Motor neuron (in vitro differentiated cells): ENCODE measurements at regions of chr20 and their contacts with region 1.

Region 1: DNA sequence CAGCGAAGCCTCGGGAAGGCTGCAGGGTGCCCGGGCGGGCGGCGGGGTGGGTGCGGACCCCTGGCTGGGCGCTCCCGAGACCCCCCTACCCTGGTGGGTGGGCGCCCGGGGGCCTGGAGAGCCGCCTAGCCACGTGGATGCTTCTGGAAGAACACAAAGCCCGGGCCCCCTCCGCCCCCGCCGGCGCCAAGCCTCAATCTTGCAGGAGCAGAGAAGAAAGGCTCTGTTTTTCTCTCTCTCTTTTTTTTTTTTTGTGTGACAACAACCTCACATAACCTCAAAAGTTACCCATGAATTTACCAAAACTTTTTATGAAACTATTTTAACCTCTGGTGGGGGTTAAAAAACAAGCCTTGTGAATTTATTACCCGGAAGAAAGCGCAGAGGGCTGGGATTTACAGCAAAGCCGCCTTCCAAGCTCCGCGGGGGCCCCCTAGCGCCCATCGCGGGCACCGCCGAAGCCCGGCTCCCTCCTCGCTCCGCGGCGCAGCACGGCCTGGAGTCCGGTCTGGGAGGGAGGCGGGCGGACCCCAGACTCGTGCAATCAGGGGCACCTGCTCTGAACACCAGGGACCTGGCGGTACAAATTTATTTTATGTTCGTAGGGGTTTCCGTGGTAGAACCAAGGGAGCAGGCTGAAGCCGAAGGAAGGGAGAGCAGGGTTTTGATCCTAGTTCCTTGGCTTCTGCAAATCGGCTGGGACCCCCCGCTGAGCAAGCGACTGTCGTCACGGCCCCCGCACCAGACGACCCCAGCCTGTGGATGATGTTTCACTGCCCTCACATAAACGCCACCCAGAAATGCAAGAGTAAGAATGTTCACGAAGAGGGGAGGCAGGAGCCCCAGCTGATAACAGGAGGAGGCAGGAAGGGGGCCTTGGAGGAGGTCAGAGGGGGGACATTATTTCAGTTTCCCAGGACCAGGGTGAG is 58.9 kb downstream of the ZNF831 start:
- ATAC-seq: peak; percentile 87 to 98 (median 90)
- H3K4me3 ChIP-seq: peak overlapping the region; percentile 28 to 40 (median 30)
- H3K27ac ChIP-seq: no peak overlapping the region
- H3K4me1 ChIP-seq: peaks cover 10 to 38% of the 10 kb centered on the region in 2 donors

Region 2: DNA sequence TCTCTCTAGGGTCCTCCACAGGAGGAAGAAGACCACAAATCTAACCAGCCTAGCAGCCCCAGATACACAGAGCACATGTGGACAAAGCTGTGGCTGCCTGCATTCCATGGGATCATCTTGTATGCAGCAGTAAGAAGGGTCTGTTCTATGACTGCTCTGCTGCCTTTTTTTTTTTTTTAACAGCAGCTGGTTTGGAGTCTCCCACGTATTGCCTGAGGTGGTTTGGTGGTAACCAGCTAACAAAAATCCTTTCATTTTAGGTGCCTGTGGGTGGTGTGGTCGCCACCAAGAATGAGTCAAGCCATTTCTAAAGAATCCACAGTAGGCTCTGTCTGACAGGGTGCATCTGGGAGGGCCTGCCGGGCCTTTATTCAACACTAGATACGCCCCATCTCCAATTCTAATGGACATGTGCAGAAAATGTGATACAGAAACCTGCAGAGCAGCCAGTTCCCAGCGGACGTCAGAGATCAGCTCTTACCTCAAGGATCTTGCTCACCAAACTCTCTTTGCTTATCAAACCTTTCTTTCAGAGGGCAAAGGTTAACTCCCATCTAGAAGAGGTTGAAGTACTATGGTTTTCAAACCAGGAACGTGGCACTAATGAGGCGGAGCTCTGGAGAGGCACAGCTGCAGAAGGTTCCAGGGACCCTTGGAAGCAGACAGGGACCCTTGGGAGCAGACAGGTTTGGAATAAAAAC is 403.8 kb before region 1 on chr20:
- in situ Hi-C with region 1: no loop called
- ATAC-seq: peak in 3 of 8 experiments; percentile 97 to 99 (median 98)
- H3K4me3 ChIP-seq: no peak overlapping the region
- H3K27ac ChIP-seq: no peak overlapping the region
- H3K4me1 ChIP-seq: no peaks in the 10 kb centered on the region

Region 3: DNA sequence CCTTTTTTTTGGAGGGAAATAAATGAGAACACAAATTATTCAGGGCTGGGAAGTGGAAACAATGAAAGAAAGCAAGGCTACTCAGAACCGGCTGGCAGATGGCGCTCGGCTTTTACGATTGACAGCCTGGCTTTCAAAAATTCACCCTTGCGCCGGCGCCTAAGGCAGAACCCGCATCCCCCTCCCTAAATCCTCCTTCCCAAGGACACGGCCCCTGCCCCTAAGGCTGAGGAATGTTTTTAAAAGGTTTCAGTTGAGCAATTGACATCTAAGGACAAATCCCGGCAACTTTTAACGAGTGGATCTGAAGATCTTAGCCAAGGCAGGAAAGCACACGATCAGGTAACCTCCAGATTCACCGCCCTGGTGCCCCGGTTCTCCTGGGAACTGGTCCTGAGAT is 353.7 kb before region 1 on chr20:
- in situ Hi-C with region 1: loop called (anchors 10 to 25 kb)
- ATAC-seq: peak in 3 of 8 experiments; percentile 17 to 35 (median 33)
- H3K4me3 ChIP-seq: no peak overlapping the region
- H3K27ac ChIP-seq: no peak overlapping the region
- H3K4me1 ChIP-seq: peaks cover 9 to 18% of the 10 kb centered on the region in 2 donors

Region 4: GRCh38 chr20:58993332-58994201 is 228.9 kb before region 1 on chr20:
- in situ Hi-C with region 1: no loop called
- ATAC-seq: no peak
- H3K4me3 ChIP-seq: no peak overlapping the region
- H3K27ac ChIP-seq: no peak overlapping the region
- H3K4me1 ChIP-seq: peaks cover 0 to 28% of the 10 kb centered on the region in 2 donors

Region 5: DNA sequence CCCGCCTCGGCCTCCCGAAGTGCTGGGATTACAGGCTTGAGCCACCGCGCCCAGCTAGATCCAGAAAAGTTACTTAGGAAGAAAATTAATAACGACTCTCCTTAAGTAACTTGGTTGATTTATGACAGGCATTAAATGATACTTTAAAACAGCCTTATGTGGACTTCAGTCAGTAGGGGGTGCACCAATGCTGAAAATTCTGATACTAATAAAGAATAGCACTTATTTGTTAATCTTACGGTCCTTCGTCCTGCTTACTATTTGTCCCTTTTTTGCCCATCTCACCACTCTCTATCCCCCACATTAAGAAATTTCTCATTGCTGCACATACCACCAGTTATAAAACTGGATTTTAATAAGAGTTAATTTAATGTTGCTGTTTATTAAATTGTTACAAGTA is 167.2 kb before region 1 on chr20:
- in situ Hi-C with region 1: loop called in 1 of 9 experiments (anchors 25 kb)
- ATAC-seq: peak in 2 of 8 experiments; percentile 32 to 59
- H3K4me3 ChIP-seq: no peak overlapping the region
- H3K27ac ChIP-seq: no peak overlapping the region
- H3K4me1 ChIP-seq: no peaks in the 10 kb centered on the region

Region 6: GRCh38 chr20:61073376-61073775 is 1850.9 kb after region 1 on chr20:
- in situ Hi-C with region 1: no loop called
- ATAC-seq: no peak
- H3K4me3 ChIP-seq: no peak overlapping the region
- H3K27ac ChIP-seq: no peak overlapping the region
- H3K4me1 ChIP-seq: peaks cover 0 to 7% of the 10 kb centered on the region in 2 donors